Panc1 (cell line): ENCODE measurements at regions of chr19 and their contacts with region 1.

Region 1: DNA sequence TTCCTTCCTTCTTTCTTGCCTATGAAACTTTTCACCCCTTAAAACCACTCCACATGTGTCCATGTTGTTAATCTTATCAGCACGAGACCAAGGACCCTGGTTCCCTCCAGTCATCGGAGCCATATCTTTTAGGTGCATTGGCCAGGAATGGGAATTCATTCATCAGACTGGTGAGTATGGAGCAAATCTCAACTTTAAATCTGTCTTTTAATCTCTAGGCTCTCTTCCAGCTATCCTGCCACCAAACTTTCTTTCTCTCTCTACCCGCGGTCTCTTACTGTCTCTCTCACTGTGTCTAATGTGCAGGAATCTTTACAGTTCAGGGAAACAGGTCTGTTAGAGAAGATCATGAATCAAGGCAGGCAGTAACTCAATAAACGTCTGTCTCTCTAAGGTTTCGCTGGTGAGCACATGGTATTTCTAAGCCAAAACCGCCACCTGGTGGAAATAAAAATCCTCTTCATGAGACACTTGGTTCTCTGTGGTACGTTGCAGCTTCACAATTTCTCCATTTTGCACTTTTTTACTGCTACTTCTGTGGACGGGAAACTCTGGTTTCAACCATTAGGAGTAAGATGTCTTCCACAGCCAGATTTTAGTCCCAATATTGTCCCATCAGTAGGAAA is 16.1 kb downstream of the LGALS16 start:
- DNase-seq: peak; percentile 100
- ATAC-seq: peak; percentile 95
- H3K4me3 ChIP-seq: no peak overlapping the region
- H3K27ac ChIP-seq: no peak overlapping the region
- H3K4me1 ChIP-seq: peaks cover 11% of the 10 kb centered on the region
- H3K27me3 ChIP-seq: peaks cover 57% of the 10 kb centered on the region
- CTCF ChIP-seq: no peak

Region 2: GRCh38 chr19:39539519-39540332 is 132.1 kb before region 1 on chr19 and contains the start of gene EID2:
- CTCF ChIA-PET with region 1: interaction called, 508 read pairs
- POLR2A ChIA-PET with region 1: interaction called, 5 read pairs
- in situ Hi-C with region 1: no loop called
- intact Hi-C with region 1: no loop called
- DNase-seq: peak; percentile 100
- ATAC-seq: peak; percentile 97
- H3K4me3 ChIP-seq: peak within 1 kb of the TSS; percentile 36 to 59
- H3K27ac ChIP-seq: peak within 1 kb of the TSS; percentile 78
- H3K4me1 ChIP-seq: peaks cover 26% of the 10 kb centered on the region
- H3K27me3 ChIP-seq: peaks cover 11% of the 10 kb centered on the region
- CTCF ChIP-seq: no peak
- total RNA-seq, gene EID2: 163 TPM

Region 3: GRCh38 chr19:39599116-39599515 is 72.7 kb before region 1 on chr19:
- CTCF ChIA-PET with region 1: interaction called, 7 read pairs
- POLR2A ChIA-PET with region 1: no interaction called
- in situ Hi-C with region 1: loop called (anchors 5 kb)
- intact Hi-C with region 1: no loop called
- DNase-seq: no peak
- ATAC-seq: no peak
- H3K4me3 ChIP-seq: no peak overlapping the region
- H3K27ac ChIP-seq: no peak overlapping the region
- H3K4me1 ChIP-seq: no peaks in the 10 kb centered on the region
- H3K27me3 ChIP-seq: peaks cover 88% of the 10 kb centered on the region
- CTCF ChIP-seq: 0 out of 2 replicates have a peak, but pooled peaks have one; percentile 1

Region 4: DNA sequence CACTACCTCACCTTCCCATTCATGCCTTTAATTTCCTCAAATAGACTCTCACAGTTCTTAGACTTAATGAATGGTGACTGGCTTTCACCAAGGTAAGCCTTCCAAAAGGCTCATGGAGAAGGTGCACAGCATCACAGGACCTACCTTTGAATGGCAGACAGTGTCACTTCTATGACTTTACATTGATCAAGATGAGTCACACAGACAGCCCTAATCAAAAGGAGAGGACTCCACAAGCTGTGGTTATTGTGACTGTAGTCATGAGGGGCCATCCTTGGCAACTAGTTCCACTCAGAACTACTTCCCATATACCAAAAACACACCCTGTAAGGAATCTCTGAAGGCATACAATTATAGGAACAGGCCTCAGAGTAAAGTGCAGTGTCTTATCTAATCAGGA is 10.3 kb before region 1 on chr19:
- CTCF ChIA-PET with region 1: interaction called, 16 read pairs
- POLR2A ChIA-PET with region 1: no interaction called
- in situ Hi-C with region 1: no loop called
- intact Hi-C with region 1: no loop called
- DNase-seq: no peak
- ATAC-seq: no peak
- H3K4me3 ChIP-seq: no peak overlapping the region
- H3K27ac ChIP-seq: no peak overlapping the region
- H3K4me1 ChIP-seq: no peaks in the 10 kb centered on the region
- H3K27me3 ChIP-seq: peaks cover 71% of the 10 kb centered on the region
- CTCF ChIP-seq: 0 out of 2 replicates have a peak, but pooled peaks have one; percentile 19

Region 5: DNA sequence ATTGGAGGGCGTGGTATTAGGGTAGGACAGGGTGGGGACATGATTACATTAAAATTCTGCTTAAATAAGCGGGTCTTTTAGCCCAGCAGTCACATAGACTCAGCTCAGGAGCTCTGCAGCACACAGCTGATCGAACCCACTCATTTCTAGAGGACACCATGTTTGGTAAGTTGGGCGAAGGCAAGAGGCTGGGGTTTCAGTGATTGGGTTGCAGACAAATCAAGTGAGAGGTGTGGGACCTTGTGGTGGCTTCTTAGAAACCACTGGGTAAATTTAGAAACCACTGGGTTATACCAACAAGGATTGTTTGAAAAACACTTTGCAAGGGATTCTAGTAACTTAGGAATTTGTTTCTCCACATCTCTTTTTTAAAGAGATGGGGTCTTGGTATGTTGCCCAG is 106.9 kb after region 1 on chr19 and contains the start of gene LEUTX:
- CTCF ChIA-PET with region 1: interaction called, 3 read pairs
- POLR2A ChIA-PET with region 1: no interaction called
- in situ Hi-C with region 1: loop called (anchors 5 kb)
- intact Hi-C with region 1: no loop called
- DNase-seq: no peak
- ATAC-seq: no peak
- H3K4me3 ChIP-seq: no peak within 1 kb of the TSS
- H3K27ac ChIP-seq: no peak within 1 kb of the TSS
- H3K4me1 ChIP-seq: no peaks in the 10 kb centered on the region
- H3K27me3 ChIP-seq: peaks cover 86% of the 10 kb centered on the region
- CTCF ChIP-seq: no peak
- total RNA-seq, gene LEUTX: not detected